Psoas muscle (tissue), 8 donors: ENCODE measurements at regions of chr1 and their contacts with region 1.

Region 1: DNA sequence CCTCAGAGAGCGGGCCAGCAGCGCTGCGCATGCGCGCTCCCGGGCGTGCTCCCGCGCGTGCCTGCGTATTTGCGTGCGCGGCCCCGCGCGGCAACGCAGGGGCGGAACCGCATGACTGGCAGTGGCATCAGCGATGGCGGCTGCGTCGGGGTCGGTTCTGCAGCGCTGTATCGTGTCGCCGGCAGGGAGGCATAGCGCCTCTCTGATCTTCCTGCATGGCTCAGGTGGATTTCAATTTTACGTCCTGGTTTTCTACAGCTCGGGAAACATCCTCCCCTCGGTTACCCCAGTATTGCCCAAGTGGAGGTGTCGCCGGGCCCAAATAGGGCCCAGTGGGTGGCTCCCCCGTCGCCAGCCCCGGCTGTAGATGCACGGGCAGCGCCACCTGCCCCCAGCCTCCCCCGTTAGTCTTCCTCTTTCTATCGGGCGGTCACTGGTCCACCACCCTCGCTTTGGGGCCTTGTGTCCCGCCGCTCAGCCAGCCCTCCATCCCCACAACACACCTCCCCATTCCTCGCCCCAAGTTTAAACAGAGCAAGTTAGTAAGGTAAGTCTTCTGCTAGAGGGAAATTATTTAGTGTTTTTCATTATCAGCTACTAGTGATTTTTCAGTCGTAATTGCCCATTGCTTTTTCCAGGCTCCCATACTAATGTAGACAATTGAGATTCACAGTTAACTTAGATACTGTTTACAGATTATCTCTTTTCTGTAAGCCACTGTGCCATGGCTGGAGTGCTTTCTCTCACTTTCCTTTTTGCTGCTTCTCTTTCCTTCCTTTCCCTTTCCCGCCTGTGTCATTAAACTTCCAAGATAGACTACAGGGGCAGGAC is at the start of gene LYPLAL1:
- DNase-seq: peak; percentile 91 to 95
- ATAC-seq: peak; percentile 92 to 96 (median 95)
- H3K4me3 ChIP-seq: peak within 1 kb of the TSS; percentile 83
- H3K27ac ChIP-seq: peak within 1 kb of the TSS; percentile 96
- H3K4me1 ChIP-seq: peaks cover 37% of the 10 kb centered on the region
- H3K27me3 ChIP-seq: no peaks in the 10 kb centered on the region
- CTCF ChIP-seq: no peak
- total RNA-seq, gene LYPLAL1: 29.3 to 44.6 (median 36.9) TPM

Region 2: GRCh38 chr1:218459878-218460711 is 713.9 kb before region 1 on chr1:
- intact Hi-C with region 1: loop called in 1 of 2 experiments (anchors 5 kb)
- DNase-seq: no peak
- ATAC-seq: peak; percentile 69 to 72 (median 72)
- H3K4me3 ChIP-seq: peak overlapping the region; percentile 12
- H3K27ac ChIP-seq: peak overlapping the region; percentile 76
- H3K4me1 ChIP-seq: peaks cover 47% of the 10 kb centered on the region
- H3K27me3 ChIP-seq: no peaks in the 10 kb centered on the region
- CTCF ChIP-seq: no peak

Region 3: GRCh38 chr1:219120624-219121544 is 53.1 kb before region 1 on chr1:
- intact Hi-C with region 1: loop called in 1 of 2 experiments (anchors 5 kb)
- DNase-seq: peak; percentile 6 to 40
- ATAC-seq: peak; percentile 27 to 68 (median 51)
- H3K4me3 ChIP-seq: no peak overlapping the region
- H3K27ac ChIP-seq: peak overlapping the region; percentile 19
- H3K4me1 ChIP-seq: peaks cover 37% of the 10 kb centered on the region
- H3K27me3 ChIP-seq: no peaks in the 10 kb centered on the region
- CTCF ChIP-seq: no peak